CD8-positive, alpha-beta T cell (primary cell): ENCODE measurements at regions of chr20 and their contacts with region 1.

Region 1: DNA sequence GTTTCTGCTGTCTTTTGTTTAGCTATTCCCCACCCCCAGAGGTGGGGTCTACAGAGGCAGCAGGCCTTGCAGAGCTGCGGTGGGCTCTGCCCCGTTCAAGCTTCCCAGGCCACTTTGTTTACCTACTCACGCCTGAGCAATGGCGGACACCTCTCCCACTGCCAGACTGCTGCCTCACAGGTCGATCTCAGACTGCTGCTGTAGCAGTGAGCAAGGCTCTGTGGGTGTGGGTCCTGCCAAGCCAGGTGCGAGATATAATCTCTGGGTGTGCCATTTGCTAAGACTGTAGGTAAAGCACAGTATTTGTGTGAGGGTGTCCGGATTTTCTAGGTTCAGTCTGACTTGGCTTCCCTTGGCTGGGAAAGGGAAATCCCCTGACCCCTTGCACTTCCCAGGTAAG is 23.6 kb upstream of the ZNF337 start:
- DNase-seq: no peak
- ATAC-seq: no peak
- H3K4me3 ChIP-seq: no peak overlapping the region
- H3K4me3 Mint-ChIP-seq: no peak overlapping the region
- H3K27ac ChIP-seq: no peak overlapping the region
- H3K27ac Mint-ChIP-seq: no peak overlapping the region
- H3K4me1 ChIP-seq: peaks cover 15% of the 10 kb centered on the region
- H3K4me1 Mint-ChIP-seq: peaks cover 32% of the 10 kb centered on the region
- H3K27me3 ChIP-seq: no peaks in the 10 kb centered on the region
- H3K27me3 Mint-ChIP-seq: no peaks in the 10 kb centered on the region
- CTCF ChIP-seq: no peak

Region 2: GRCh38 chr20:25750765-25751696 is 30.7 kb after region 1 on chr20:
- CTCF ChIA-PET with region 1: no interaction called
- POLR2A ChIA-PET with region 1: no interaction called
- intact Hi-C with region 1: loop called in 1 of 2 experiments (anchors 2 kb)
- DNase-seq: peak; percentile 26 to 75 (median 55)
- ATAC-seq: peak; percentile 95
- H3K4me3 ChIP-seq: peak overlapping the region; percentile 45 to 73
- H3K4me3 Mint-ChIP-seq: peak overlapping the region; percentile 87
- H3K27ac ChIP-seq: peak overlapping the region in 1 of 2 experiments; percentile 41
- H3K27ac Mint-ChIP-seq: peak overlapping the region; percentile 85
- H3K4me1 ChIP-seq: peaks cover 16% of the 10 kb centered on the region
- H3K4me1 Mint-ChIP-seq: peaks cover 15% of the 10 kb centered on the region
- H3K27me3 ChIP-seq: no peaks in the 10 kb centered on the region
- H3K27me3 Mint-ChIP-seq: no peaks in the 10 kb centered on the region
- CTCF ChIP-seq: no peak